Spleen (tissue), 13 donors: ENCODE measurements at regions of chr4 and their contacts with region 1.

Region 1: DNA sequence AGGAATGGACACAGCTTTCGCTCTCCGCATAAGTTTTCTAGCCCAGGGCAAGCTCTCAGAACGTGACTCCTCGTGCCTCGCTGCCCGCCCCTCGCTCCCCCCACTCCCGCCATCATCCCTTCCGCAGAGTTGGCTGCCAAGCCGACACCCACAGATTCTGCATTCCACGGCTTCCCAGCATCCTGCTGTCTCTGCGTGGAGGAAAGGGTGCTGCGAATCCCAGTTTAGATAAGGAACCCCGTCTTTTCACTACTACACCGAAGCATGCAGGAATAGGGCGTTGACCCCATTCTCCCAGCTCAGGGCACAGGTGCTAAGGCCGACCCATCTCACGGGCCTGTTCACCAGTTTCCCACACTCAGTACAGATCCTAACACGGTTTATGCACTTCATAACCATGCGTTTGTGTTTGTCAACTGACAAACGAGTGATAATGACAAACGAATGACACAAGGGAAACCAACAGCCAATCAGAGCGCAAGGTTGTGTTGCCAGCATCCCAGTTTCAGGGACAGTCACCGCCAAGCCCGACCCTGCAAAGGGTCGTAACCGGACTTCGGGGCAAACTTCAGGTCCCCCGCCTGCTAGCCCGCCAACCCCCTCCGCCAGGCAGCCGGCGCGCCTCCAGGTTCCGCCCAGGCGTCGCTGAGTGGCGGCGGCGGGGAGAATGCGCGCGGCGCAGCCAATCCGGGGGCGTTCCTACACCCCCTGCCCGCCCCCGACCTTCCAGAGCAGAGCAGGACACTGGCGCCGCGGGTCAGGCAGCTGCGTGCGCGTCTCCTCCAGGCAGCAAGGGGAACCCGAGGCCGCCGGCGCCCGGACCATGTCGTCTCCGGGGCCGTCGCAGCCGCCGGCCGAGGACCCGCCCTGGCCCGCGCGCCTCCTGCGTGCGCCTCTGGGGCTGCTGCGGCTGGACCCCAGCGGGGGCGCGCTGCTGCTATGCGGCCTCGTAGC is at the start of gene CYP2U1:
- DNase-seq: peak; percentile 97
- H3K4me3 ChIP-seq: peak within 1 kb of the TSS; percentile 70 to 87 (median 81)
- H3K27ac ChIP-seq: peak within 1 kb of the TSS; percentile 69 to 88 (median 84)
- H3K4me1 ChIP-seq: peaks cover 7 to 37% (median 23%) of the 10 kb centered on the region in 6 donors
- H3K27me3 ChIP-seq: peaks cover 0 to 5% (median 0%) of the 10 kb centered on the region in 7 donors
- CTCF ChIP-seq: peak in 8 of 11 experiments; percentile 16 to 53 (median 29)
- POLR2A ChIP-seq: peak in 1 of 3 donors; percentile 55
- total RNA-seq, gene CYP2U1: 10.4 to 14.0 (median 12.5) TPM

Region 2: GRCh38 chr4:107825072-107825824 is 105.8 kb before region 1 on chr4:
- intact Hi-C with region 1: no loop called
- DNase-seq: no peak
- H3K4me3 ChIP-seq: peak overlapping the region; percentile 16 to 75 (median 48)
- H3K27ac ChIP-seq: peak overlapping the region in 7 of 8 donors; percentile 65 to 91 (median 77)
- H3K4me1 ChIP-seq: peaks cover 0 to 47% (median 16%) of the 10 kb centered on the region in 6 donors
- H3K27me3 ChIP-seq: peaks cover 0 to 53% (median 14%) of the 10 kb centered on the region in 7 donors
- CTCF ChIP-seq: no peak
- POLR2A ChIP-seq: no peak

Region 3: DNA sequence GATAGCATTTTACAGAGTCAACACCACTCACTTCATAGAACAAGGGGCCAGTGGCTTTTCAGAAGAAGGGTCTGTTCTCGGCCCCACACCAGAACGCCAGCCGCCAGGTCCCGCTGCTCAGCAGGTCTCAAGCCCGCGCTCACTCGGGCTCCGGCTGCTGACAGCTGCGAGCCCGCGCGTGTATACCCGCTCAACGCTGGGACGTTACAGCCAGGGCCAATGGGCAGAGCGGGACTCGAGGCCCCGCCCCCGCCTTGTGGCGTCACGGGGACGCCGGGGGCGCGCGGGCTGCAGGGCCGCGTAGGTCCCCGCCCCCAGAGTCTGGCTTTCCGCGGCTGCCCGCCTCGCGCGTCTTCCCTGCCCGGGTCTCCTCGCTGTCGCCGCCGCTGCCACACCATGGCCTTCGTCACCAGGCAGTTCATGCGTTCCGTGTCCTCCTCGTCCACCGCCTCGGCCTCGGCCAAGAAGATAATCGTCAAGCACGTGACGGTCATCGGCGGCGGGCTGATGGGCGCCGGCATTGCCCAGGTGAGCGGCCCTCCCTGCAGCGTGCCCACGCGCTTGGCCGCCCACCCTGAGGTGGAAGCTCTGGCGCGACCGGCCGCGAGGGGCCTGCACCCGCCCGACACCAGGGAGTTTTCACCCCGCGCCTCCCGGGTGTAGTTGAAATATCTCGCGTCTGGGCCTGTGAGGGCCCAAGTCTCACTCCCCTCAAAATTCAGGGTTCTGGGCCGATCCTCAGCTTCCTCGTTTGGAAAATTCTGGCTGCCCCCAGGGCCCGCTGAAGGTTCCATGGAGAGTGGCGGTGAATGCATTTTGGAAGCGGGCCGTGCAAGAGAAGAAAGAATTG is 58.7 kb after region 1 on chr4 and contains the start of gene HADH:
- intact Hi-C with region 1: loop called (anchors 5 kb)
- DNase-seq: peak; percentile 99
- H3K4me3 ChIP-seq: peak within 1 kb of the TSS; percentile 69 to 92 (median 81)
- H3K27ac ChIP-seq: peak within 1 kb of the TSS; percentile 71 to 91 (median 86)
- H3K4me1 ChIP-seq: peaks cover 20 to 63% (median 48%) of the 10 kb centered on the region in 6 donors
- H3K27me3 ChIP-seq: no peaks in the 10 kb centered on the region
- CTCF ChIP-seq: peak in 1 of 11 experiments; percentile 41
- POLR2A ChIP-seq: peak in 2 of 3 donors; percentile 45 to 89
- total RNA-seq, gene HADH: 24.4 to 39.9 (median 27.6) TPM